Activated naive CD4-positive, alpha-beta T cell treated with anti-CD3 and anti-CD28 coated beads for 36 hours (primary cell): ENCODE measurements at regions of chr5 and their contacts with region 1.

Region 1: DNA sequence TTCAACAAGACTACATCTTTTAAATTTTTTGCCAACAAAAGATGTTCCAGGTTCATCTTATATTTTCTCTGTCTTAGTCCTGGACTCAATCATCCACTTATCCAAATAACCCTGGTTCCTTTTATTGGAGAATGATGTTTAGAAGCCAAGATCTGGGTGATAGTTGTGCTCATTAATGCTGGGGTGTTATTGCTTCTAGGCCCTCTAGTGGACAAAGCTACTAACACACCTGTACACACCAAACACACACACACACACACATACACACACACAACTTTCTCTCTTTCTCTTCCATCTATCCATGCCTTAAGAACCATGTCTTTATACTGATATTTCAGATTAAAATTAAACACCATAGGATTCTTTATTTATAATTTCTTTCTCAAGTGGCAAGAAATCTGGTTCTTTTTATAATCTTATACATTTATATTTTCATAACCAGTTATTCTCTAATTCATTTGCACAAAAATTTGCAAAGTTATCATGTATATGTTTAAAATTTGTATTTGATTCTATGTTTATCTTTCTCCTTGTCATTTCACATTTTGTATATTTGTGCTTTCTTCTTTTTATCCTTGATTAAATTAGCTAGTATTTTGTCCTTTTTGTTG is 179.1 kb upstream of the SMIM23 start:
- DNase-seq: peak; percentile 11
- H3K4me3 Mint-ChIP-seq: no peak overlapping the region
- H3K27ac Mint-ChIP-seq: no peak overlapping the region
- H3K4me1 Mint-ChIP-seq: peaks cover 4% of the 10 kb centered on the region
- H3K27me3 Mint-ChIP-seq: peaks cover 38% of the 10 kb centered on the region

Region 2: GRCh38 chr5:171418316-171418981 is 188.1 kb before region 1 on chr5:
- CTCF ChIA-PET with region 1: interaction called, 8 read pairs
- intact Hi-C with region 1: loop called (anchors 2 kb)
- DNase-seq: peak; percentile 71
- H3K4me3 Mint-ChIP-seq: peak overlapping the region; percentile 53
- H3K27ac Mint-ChIP-seq: no peak overlapping the region
- H3K4me1 Mint-ChIP-seq: peaks cover 13% of the 10 kb centered on the region
- H3K27me3 Mint-ChIP-seq: peaks cover 25% of the 10 kb centered on the region

Region 3: DNA sequence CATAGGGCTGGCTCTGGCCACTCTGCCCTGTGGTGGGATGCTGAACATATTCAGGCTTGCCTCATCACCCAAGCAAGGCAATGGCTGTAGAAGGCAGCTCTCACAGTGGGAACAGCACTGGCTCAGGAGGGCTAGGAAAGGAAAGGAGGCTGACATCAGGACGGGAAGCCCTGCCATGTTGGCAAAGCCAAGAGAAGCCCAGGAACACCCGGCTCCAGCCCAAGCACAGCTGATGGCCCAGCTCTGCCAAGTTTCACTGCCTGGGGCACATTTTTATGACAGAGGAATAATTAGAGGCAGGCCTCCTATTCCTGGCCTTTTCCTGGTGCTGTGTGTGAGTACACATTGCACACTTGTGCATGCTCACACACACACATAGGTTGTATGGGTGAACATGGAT is 15.5 kb after region 1 on chr5:
- CTCF ChIA-PET with region 1: no interaction called
- intact Hi-C with region 1: no loop called
- DNase-seq: no peak
- H3K4me3 Mint-ChIP-seq: no peak overlapping the region
- H3K27ac Mint-ChIP-seq: no peak overlapping the region
- H3K4me1 Mint-ChIP-seq: no peaks in the 10 kb centered on the region
- H3K27me3 Mint-ChIP-seq: peaks cover 2% of the 10 kb centered on the region